Prostate gland (tissue), 2 donors: ENCODE measurements at regions of chr6 and their contacts with region 1.

Region 1: GRCh38 chr6:122116119-122116834 is 283.2 kb upstream of the HSF2 start:
- DNase-seq: no peak
- H3K4me3 ChIP-seq: no peak overlapping the region
- H3K27ac ChIP-seq: no peak overlapping the region
- H3K4me1 ChIP-seq: no peaks in the 10 kb centered on the region
- H3K27me3 ChIP-seq: no peaks in the 10 kb centered on the region
- CTCF ChIP-seq: no peak
- POLR2A ChIP-seq: no peak

Region 2: DNA sequence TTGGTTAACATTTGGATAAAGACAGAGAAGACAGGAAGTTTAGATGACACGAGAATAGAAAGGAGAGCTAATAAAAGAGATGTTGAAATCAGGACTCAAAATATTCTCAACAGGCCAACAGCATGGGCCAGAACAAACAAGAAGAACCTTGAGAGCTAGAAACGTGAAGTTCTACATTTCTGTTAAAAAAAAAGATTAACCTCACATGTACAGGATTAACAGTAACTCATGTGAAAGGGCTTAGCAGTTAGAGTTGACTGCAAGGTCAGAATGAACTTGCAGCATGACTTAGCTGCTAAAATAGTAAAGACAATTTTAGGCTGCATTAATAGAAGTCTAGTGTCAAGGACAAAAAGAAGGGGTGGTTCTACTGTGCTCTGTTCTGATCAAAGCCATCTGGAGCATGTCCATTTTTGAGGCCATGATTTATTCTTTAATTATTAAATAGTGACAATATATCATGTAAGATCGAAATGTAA is 47.9 kb before region 1 on chr6:
- intact Hi-C with region 1: loop called (anchors 10 kb)
- DNase-seq: no peak
- H3K4me3 ChIP-seq: no peak overlapping the region
- H3K27ac ChIP-seq: no peak overlapping the region
- H3K4me1 ChIP-seq: no peaks in the 10 kb centered on the region
- H3K27me3 ChIP-seq: no peaks in the 10 kb centered on the region
- CTCF ChIP-seq: no peak
- POLR2A ChIP-seq: no peak